Endothelial cell of umbilical vein (primary cell): ENCODE measurements at regions of chr2 and their contacts with region 1.

Region 1: DNA sequence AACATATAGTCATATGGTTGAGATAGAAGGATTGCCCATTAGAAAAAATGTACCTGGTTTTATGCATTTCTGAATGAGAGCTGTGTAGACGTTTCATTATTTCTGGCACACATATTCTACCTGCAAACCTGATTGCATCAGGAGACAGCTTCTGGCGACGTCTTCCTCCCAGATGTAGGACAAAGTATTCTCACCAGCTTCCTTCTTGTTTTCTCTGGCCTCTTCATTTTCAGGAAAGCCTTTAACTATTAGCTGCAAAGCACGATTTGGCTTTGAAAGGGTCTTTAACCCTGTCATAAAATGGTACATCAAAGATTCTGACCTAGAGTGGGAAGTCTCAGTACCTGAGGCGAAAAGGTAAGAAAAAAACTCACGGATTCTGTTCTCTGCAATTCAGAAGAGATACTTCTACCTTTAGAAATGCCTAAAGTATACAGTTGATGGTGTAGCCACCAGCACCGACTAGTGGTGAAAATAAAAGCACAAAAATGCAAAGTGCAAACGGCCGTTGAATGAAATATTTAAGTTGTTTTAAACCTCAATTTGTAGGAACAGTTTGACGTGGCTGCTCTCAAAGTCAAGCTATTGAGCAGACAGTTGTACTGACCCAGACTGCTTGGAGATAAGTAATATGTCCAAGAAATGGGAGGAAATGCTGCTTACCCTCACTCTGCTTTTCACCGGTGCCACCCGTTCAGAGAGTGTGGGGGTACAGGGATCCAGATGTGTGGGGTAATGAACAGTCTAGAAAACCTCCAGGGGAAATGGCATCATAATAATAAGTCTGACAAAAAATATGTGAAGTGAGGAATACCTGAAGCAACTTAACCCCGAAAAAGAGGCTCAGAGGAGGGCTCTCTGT is 20.2 kb downstream of the IL18RAP start:
- DNase-seq: peak; percentile 64
- H3K4me3 ChIP-seq: no peak overlapping the region
- H3K27ac ChIP-seq: no peak overlapping the region
- H3K4me1 ChIP-seq: no peaks in the 10 kb centered on the region
- H3K27me3 ChIP-seq: no peaks in the 10 kb centered on the region
- CTCF ChIP-seq: peak; percentile 56 to 62
- POLR2A ChIP-seq: no peak

Region 2: GRCh38 chr2:102187496-102188150 is 255.6 kb before region 1 on chr2:
- CTCF ChIA-PET with region 1: interaction called, 3 read pairs
- POLR2A ChIA-PET with region 1: no interaction called
- dilution Hi-C with region 1: no loop called
- intact Hi-C with region 1: loop called (anchors 5 kb)
- DNase-seq: peak; percentile 40
- H3K4me3 ChIP-seq: peak overlapping the region; percentile 34 to 47 (median 38)
- H3K27ac ChIP-seq: no peak overlapping the region
- H3K4me1 ChIP-seq: peaks cover 18% of the 10 kb centered on the region
- H3K27me3 ChIP-seq: no peaks in the 10 kb centered on the region
- CTCF ChIP-seq: peak in 1 of 2 donors; percentile 43
- POLR2A ChIP-seq: no peak

Region 3: GRCh38 chr2:102235491-102235890 is 207.7 kb before region 1 on chr2:
- CTCF ChIA-PET with region 1: interaction called, 52 read pairs
- POLR2A ChIA-PET with region 1: no interaction called
- dilution Hi-C with region 1: no loop called
- intact Hi-C with region 1: loop called (anchors 1 kb)
- DNase-seq: peak; percentile 40
- H3K4me3 ChIP-seq: no peak overlapping the region
- H3K27ac ChIP-seq: no peak overlapping the region
- H3K4me1 ChIP-seq: peaks cover 6% of the 10 kb centered on the region
- H3K27me3 ChIP-seq: no peaks in the 10 kb centered on the region
- CTCF ChIP-seq: peak; percentile 36 to 67
- POLR2A ChIP-seq: no peak

Region 4: DNA sequence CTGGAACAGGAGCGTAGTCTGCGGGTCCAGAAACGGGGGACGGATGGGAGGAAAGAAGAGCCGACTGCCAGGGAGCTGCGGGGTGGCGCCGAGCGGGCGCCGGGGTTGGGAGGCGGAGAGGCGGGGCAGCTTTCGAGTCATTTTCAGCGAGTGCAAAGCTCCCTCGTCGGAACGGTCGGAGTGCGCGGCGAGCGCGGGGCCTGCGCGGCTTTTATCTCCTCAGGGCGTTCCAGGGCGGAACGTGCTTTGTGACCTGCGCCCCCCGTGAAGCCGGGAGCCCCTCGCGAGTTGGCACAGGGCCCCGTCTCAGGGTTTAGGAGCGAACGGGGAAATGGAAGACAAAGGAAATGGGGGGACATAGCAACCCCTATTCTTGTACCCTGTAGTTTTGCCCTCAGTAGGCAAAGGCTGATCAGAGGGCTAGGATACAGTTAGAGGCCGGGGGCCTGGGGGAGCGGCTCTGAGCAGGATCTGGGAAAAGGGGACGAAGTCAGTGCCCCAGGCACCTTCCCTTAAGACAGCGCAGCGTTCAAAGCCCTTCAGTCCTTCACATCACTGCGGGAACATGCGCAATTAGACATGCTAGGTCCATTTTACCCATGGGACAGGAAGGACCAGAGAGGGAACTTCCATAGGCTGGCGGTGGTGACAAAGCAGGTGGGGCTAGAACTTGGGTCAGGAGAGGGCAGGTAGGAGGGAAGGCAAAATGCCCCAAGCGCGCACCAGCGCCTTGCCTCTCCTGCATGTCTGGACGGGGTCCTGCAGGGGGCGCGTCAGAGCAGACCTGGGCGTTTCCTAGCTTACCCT is 192.0 kb before region 1 on chr2:
- CTCF ChIA-PET with region 1: interaction called, 32 read pairs
- POLR2A ChIA-PET with region 1: no interaction called
- dilution Hi-C with region 1: no loop called
- intact Hi-C with region 1: no loop called
- DNase-seq: peak; percentile 23
- H3K4me3 ChIP-seq: peak overlapping the region in 2 of 3 experiments; percentile 36 to 42
- H3K27ac ChIP-seq: no peak overlapping the region
- H3K4me1 ChIP-seq: peaks cover 8% of the 10 kb centered on the region
- H3K27me3 ChIP-seq: no peaks in the 10 kb centered on the region
- CTCF ChIP-seq: peak in 1 of 2 donors; percentile 34
- POLR2A ChIP-seq: no peak

Region 5: DNA sequence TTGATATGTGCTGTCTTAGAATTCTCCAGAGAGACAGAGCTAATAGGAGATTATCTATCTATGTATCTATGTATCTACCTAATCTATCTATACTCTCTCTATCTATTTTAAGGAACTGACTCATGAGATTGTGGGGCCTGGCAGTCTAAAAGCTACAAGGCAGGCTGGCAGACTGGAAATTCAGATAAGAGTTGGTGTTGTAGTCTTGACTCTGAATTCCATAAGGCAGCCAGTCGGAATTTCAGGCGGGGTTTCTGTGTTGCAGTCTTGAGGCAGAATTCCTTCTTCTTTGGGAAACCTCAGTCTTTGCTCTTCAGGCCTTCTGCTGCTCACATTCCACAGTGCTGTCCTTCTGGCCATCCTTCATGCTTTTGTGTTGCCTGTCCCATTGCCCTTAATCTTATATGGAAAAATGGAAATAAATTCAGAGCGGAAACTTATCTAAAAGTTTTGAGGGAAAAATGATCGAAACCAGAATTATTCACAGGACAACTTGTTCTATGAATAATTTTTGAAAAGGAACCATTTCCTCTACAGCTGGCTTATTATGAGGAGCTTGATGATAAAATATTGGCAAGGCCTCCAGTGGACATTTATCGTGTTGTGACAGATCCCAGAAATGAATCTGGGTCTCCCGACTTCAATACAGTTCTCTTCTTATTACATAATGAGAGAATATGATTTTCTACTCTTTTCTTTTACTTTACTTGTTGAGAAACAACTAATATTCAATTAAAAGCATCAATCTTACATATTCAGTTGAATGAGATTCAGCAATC is 121.1 kb before region 1 on chr2:
- CTCF ChIA-PET with region 1: no interaction called
- POLR2A ChIA-PET with region 1: no interaction called
- dilution Hi-C with region 1: no loop called
- intact Hi-C with region 1: no loop called
- DNase-seq: peak; percentile 51
- H3K4me3 ChIP-seq: no peak overlapping the region
- H3K27ac ChIP-seq: no peak overlapping the region
- H3K4me1 ChIP-seq: peaks cover 16% of the 10 kb centered on the region
- H3K27me3 ChIP-seq: no peaks in the 10 kb centered on the region
- CTCF ChIP-seq: no peak
- POLR2A ChIP-seq: no peak

Region 6: GRCh38 chr2:102355526-102356380 is 87.4 kb before region 1 on chr2 and contains the start of gene IL18R1:
- CTCF ChIA-PET with region 1: interaction called, 28 read pairs
- POLR2A ChIA-PET with region 1: no interaction called
- dilution Hi-C with region 1: no loop called
- intact Hi-C with region 1: loop called (anchors 1 kb)
- DNase-seq: peak; percentile 71
- H3K4me3 ChIP-seq: peak within 1 kb of the TSS; percentile 70 to 88 (median 79)
- H3K27ac ChIP-seq: peak within 1 kb of the TSS; percentile 63
- H3K4me1 ChIP-seq: peaks cover 13% of the 10 kb centered on the region
- H3K27me3 ChIP-seq: no peaks in the 10 kb centered on the region
- CTCF ChIP-seq: peak; percentile 72 to 84
- POLR2A ChIP-seq: no peak
- total RNA-seq, gene IL18R1: 3.6 and 4.0 TPM in 2 replicates